ENCODE measurements at regions of chr17 and their contacts with region 1.

Region 1: DNA sequence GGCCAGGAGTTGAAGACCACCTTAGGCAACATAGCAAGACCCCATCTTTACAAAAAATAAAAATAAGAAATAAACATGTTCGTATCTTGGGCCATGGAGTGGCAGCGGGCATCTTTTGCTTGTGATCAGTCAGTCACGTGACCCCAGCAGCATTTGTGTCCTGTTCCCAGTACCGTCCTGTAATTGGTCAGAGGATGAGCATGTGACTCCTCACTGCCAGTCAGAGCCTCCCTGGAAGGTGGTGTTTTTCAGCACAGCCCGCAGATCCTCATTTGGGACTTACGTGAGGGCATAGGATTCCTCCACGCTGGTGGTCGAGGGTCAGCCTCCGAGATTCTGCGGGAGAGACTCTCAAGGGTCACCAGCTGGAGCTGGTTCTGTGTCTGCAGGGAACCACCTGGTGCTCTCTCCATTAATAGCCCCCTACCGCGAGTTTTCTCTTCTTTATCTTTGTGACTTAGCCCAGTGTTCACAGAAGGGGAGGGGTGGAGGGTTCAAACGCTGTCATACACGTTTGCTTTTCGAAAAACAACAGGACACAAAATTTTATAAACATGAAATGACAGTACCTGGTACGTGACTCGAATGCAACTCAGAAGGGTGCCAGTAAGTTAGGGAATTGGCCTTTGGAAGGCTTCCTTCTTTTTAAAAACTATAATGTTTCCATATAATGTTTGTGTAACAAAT is 17.2 kb downstream of the MRC2 start:
- DNase-seq: no peak
- ATAC-seq: no peak
- H3K4me3 ChIP-seq: no peak overlapping the region
- H3K27ac ChIP-seq: no peak overlapping the region
- H3K4me1 ChIP-seq: peaks cover 2 to 21% (median 12%) of the 10 kb centered on the region in 9 donors
- H3K27me3 ChIP-seq: peaks cover 0 to 4% (median 0%) of the 10 kb centered on the region in 7 donors
- CTCF ChIP-seq: no peak

Region 2: DNA sequence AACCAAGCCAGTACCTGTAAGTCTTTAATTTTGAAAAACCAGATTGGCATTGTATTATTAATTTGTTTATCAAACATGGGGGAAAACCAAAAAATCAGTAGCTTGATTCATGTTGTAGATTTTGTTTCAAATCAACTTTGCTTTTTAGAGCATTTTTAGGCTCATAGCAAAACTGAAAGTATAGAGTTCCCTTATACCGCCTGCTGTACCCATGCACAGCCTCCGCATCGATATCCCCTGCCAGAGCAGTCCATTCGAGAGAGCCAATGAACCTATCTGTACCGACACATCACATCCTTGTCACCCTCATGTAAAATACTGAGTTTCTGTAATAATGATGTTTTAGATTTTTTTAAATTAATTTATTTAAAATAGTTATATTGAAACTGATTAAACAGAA is 33.3 kb before region 1 on chr17:
- intact Hi-C with region 1: no loop called
- DNase-seq: no peak
- ATAC-seq: no peak
- H3K4me3 ChIP-seq: no peak overlapping the region
- H3K27ac ChIP-seq: peak overlapping the region in 2 of 10 donors; percentile 0 to 59
- H3K4me1 ChIP-seq: peaks cover 0 to 24% (median 11%) of the 10 kb centered on the region in 9 donors
- H3K27me3 ChIP-seq: no peaks in the 10 kb centered on the region
- CTCF ChIP-seq: no peak

Region 3: DNA sequence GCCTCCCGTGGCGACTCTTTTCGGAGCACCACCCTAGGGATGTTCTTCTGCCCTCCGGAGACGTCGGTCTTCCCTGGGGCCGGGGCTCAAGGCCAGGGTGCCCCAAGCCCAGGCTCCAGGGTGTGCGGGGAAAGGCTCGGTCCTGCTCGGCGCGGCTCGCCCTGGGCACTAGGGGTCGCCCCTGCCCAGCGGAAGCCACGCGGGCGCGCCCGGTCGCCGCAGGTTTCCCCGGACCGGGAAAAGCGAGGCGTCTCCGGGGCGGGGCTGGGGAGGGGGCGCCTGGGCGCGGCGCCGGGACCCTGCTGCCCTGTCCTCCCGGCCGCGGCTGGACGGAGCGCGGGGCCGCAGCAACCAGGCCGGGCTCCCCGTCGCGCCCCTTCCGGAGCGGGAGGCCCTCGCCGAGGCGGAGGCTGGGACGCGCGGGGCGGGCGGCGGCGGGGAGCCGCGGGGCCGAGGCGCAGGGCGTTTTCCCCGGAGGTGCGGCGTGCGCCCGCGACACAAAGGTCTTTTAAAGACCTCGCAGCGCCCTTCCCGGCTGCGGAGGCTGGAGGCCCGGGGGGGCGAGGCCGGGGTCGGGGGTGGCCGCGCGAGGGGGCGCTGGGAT is 59.2 kb after region 1 on chr17:
- intact Hi-C with region 1: no loop called
- DNase-seq: peak; percentile 62 to 79
- ATAC-seq: peak; percentile 84 to 92 (median 86)
- H3K4me3 ChIP-seq: peak overlapping the region; percentile 36 to 73 (median 66)
- H3K27ac ChIP-seq: peak overlapping the region; percentile 71 to 95 (median 86)
- H3K4me1 ChIP-seq: peaks cover 8 to 39% (median 26%) of the 10 kb centered on the region in 9 donors
- H3K27me3 ChIP-seq: peaks cover 0 to 25% (median 0%) of the 10 kb centered on the region in 7 donors
- CTCF ChIP-seq: peak; percentile 69 to 94 (median 89)

Region 4: DNA sequence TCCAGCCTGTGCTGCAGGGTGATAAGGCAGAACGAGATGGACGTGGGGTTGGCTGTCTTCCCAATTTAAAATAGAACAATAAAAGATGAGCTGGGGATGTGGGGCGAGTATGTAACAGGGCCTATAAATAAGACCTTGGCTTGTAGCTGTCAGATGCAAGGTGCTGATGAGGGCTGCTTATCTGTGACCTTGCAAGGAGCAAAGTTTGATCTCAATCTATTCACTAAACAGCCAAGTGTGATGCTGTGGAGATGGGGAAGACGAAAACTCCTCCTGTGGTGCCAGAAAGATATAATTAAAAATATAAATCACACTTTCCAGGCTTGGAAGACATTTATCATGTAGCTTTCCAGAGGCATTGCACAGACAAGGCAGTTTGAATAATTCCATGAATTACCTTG is 1645.1 kb after region 1 on chr17:
- intact Hi-C with region 1: loop called in 1 of 10 experiments (anchors 5 kb)
- DNase-seq: no peak
- ATAC-seq: peak in 4 of 8 donors; percentile 30 to 54 (median 36)
- H3K4me3 ChIP-seq: no peak overlapping the region
- H3K27ac ChIP-seq: peak overlapping the region in 1 of 10 donors; percentile 39
- H3K4me1 ChIP-seq: peaks cover 0 to 8% (median 4%) of the 10 kb centered on the region in 9 donors
- H3K27me3 ChIP-seq: no peaks in the 10 kb centered on the region
- CTCF ChIP-seq: no peak

Measured in heart right ventricle (tissue), 16 donors.